ENCODE measurements at regions of chr12 and their contacts with region 1.

Region 1: DNA sequence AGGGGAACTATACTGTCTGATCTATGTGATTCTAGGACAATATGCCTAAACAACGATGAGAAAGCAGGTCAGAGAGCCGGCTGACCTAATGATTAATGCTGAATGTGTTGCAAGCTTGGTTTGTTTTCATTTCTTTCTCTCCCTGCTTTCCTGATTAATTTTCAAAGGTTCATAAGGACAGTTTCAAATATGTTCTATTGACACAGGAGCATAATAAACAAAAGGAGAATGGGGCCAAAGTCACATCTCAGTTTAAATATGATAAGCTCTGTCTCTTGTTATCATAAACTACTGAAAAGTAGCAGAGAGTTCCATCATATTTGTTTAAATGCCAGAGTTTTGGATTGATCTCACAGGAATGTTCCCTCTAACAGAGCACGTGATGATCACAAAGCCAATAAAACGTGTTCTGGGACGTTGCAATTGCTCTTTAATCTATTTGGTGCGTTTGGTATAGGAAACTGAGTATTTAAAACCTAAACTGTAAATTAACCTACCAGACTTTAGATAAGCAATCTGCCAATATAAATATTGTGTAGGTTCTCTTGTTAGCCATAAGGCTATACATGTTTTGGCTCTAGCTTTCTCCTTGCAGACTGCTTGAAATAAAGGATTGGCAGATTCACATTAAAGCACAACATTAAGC is 3.7 kb upstream of the HSD17B6 start:
- DNase-seq: no peak

Region 2: DNA sequence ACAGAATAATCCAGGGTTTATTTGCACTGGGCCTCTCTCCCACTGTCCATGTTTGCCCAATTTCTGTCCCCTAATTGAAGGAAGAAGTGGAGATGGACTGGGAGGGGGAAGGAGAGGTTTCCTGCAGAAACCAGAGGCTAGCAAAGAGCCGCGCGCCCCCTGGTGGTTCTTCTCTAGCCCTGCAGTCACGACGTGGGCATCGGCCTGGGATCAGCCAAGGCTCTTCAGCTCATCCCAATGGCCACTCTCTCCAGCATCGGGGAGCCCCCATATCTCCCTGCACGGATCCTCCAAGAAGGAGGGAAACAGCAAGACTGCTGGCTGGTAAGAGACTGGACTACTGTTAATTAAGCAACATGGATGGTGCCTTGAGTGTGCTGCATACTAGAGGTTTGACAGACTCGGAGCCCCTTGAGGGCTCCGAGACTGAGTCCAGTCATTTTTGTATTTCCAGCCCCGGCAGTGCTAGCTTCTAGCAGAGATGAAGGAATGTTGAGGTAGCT is 228.2 kb after region 1 on chr12:
- intact Hi-C with region 1: loop called (anchors 2 kb)
- DNase-seq: peak; percentile 69 to 94 (median 86)

Measured in head of caudate nucleus (tissue), 42 donors.